ENCODE measurements at regions of chr14 and their contacts with region 1.

Region 1: DNA sequence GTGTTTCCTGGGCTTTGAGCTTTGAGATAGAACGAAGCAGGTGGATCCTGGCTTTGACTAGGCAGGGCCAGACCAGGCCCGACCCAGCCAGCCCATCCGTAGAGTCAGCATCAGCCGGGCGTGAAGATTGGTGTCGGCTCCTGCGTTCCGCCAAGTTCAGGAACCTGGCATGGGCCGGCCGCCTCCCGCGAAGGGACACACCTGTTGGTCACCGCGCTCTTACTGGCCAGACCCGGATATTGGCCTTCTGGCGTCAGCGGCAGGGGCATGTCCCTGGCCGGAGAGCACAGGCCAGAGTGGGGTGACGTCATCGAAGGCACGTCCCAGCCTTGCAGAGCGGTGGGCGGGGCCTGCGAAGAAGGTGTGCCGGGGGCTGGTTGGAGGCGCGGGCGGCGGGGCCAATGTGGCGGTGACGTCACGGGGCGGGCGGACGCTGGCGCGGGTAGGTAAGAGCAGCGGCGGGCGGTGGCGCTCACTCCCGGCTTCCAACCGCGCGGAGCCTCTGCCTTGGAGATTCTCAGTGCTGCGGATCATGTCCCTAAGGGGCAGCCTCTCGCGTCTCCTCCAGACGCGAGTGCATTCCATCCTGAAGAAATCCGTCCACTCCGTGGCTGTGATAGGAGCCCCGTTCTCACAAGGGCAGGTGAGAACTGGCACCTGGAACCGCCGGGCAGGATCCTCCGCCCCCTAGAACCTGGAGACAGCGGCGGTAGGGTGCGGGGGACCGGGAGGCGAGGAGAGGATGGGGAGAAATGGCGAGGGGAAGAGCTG is at the start of gene ARG2:
- DNase-seq: peak; percentile 91 to 96
- ATAC-seq: peak; percentile 91 to 94
- H3K4me3 ChIP-seq: peak within 1 kb of the TSS; percentile 52
- H3K27ac ChIP-seq: peak within 1 kb of the TSS; percentile 31 to 46; a peak in 4 of 6 replicates
- H3K4me1 ChIP-seq: peaks cover 23% of the 10 kb centered on the region
- CTCF ChIP-seq: no peak
- EP300 ChIP-seq: no peak
- POLR2A ChIP-seq: no peak
- RAD21 ChIP-seq: no peak
- polyA plus RNA-seq, gene ARG2: 2.5 TPM in 2 replicates

Region 2: DNA sequence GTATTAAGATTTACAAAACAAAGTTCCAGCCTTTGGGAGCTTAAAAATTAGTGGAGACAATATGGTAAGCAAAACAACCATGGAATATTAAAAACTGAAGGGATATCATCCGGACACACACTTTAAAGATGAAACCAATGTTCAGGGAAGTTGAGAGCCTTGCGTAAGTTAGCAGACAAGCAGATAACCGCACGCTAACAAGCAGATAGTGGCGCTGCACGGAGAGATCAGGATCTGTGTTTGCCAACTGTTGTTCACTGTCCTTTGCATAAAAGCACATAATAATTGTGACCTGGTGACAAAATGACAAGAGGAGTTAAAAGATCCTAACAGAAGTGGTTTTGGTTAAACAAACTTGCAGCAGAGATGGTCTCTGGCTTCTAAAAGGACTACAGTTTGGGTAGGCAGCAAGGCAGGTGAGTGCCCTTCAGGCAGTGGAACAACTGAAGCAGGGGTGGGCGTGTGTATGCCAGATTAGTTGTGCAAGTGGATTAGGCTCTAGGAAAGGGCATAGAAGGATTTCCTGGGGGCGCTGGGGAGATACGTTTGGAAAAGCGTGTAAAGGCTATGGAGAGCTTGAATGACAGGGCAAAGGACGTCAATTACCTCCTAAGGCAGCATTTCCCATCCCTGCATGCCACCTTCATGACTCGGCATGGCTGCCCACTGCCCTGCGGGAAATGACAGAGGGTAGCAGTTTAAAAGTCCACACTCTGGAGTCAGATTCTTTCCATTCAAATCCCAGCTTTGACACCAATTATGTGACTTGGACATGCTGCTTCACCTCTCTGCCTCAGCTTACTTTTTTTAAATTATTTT is 116.5 kb before region 1 on chr14:
- CTCF ChIA-PET with region 1: no interaction called
- POLR2A ChIA-PET with region 1: no interaction called
- DNase-seq: no peak
- ATAC-seq: no peak
- H3K4me3 ChIP-seq: no peak overlapping the region
- H3K27ac ChIP-seq: no peak overlapping the region
- H3K4me1 ChIP-seq: no peaks in the 10 kb centered on the region
- CTCF ChIP-seq: no peak
- EP300 ChIP-seq: no peak
- POLR2A ChIP-seq: no peak
- RAD21 ChIP-seq: no peak

Region 3: DNA sequence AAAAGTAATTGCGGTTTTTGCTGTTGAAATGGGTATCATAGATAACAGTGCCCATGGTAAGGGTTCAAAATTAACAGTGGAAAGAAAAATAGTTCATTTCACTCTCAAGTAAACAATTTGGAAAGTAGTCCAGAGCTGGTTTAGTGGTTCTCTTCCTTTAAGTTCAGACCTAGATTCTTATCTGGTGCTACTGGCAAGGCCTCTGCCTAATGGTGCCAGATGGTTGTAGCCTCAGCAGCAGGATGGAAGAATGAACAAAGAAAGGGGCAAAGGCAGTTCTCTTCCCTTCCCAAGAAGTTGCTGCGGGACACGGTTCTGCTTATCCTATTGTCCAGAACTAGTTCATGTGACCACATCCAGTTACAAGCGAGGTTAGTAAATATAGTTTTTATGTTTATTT is 10.6 kb after region 1 on chr14:
- CTCF ChIA-PET with region 1: interaction called, 12 read pairs
- POLR2A ChIA-PET with region 1: no interaction called
- DNase-seq: no peak
- ATAC-seq: no peak
- H3K4me3 ChIP-seq: no peak overlapping the region
- H3K27ac ChIP-seq: no peak overlapping the region
- H3K4me1 ChIP-seq: no peaks in the 10 kb centered on the region
- CTCF ChIP-seq: no peak
- EP300 ChIP-seq: no peak
- POLR2A ChIP-seq: no peak
- RAD21 ChIP-seq: no peak

Region 4: DNA sequence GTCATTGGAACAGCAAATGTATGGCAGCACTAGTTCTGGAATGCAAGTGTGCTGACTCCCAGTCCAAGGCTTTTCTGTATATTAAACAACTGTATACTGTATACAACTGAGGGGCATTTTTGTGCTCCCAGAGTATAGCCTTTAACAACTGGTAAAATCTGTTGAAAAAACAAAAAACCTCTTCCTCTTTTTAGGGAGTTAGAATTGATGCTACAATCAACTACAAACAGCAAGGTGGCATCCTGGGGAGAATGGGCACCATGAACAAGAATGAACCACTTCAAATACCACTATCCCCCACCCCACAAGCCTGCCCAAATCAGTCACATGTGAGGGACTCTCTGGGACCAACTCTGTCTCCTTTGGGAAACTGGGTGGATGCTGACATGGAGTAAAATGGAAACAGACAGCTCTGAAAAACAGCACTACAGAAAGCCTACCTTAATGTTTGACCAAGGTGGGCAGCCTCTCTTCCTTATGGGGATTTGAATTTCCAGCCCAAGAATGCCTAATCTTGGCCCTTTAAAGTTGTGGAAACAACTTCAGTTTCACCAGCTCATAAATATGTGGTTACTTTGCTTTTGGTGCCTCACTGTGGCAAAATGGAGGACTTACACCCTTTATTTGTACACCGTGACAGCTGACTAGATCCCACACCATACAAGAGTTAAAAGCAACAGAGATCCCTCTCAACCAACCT is 47.3 kb after region 1 on chr14:
- CTCF ChIA-PET with region 1: interaction called, 72 read pairs
- POLR2A ChIA-PET with region 1: no interaction called
- DNase-seq: peak; percentile 43 to 68
- ATAC-seq: peak; percentile 81 to 96
- H3K4me3 ChIP-seq: no peak overlapping the region
- H3K27ac ChIP-seq: no peak overlapping the region
- H3K4me1 ChIP-seq: no peaks in the 10 kb centered on the region
- CTCF ChIP-seq: peak; percentile 82
- EP300 ChIP-seq: no peak
- POLR2A ChIP-seq: no peak
- RAD21 ChIP-seq: peak; percentile 80 to 83

Region 5: DNA sequence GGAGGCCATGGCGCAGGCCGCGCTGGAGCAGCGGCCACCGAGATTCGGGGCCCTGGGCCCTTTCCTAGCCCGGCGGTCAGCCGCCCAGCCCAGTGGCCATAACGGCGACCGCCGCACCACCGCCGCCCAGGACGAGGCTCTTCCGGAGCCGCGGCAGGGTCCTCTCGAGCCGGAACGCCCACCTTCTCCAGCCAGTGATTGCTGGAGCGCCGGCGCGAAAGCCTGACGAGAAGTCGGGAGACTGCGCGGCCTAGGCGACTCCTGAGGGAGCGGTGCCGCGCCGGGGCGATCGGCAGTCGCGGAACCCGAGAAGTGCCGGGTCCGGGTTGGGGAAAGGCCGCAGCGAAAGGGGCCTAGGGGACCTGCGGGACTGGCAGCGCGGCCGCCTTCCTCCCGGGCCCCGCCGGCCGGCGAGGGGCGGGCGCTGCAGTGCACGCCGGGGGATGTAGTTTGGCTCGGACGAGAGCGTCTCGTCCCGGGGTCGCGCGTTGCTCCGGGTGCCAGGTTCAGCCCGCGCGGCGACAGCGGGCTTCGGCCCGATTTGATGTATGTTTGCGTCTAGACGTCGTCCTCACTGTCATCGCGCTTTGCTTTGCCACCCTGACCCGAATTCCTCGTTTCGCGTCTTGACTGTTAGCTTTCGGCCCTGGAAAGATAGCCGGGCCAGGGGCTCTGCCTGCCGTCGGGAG is 55.0 kb after region 1 on chr14 and contains the start of gene VTI1B:
- CTCF ChIA-PET with region 1: interaction called, 16 read pairs
- POLR2A ChIA-PET with region 1: interaction called, 3 read pairs
- DNase-seq: peak; percentile 74 to 81
- ATAC-seq: peak; percentile 96
- H3K4me3 ChIP-seq: peak within 1 kb of the TSS; percentile 97
- H3K27ac ChIP-seq: peak within 1 kb of the TSS; percentile 96 to 99
- H3K4me1 ChIP-seq: peaks cover 26% of the 10 kb centered on the region; the same call in 2 of the 3 replicates
- CTCF ChIP-seq: peak; percentile 24; the same call in 1 of the 3 replicates
- EP300 ChIP-seq: no peak
- POLR2A ChIP-seq: peak; percentile 58
- RAD21 ChIP-seq: no peak; a peak in 1 of 5 replicates
- polyA plus RNA-seq, gene VTI1B: 77.2 and 102 TPM in 2 replicates

Region 6: DNA sequence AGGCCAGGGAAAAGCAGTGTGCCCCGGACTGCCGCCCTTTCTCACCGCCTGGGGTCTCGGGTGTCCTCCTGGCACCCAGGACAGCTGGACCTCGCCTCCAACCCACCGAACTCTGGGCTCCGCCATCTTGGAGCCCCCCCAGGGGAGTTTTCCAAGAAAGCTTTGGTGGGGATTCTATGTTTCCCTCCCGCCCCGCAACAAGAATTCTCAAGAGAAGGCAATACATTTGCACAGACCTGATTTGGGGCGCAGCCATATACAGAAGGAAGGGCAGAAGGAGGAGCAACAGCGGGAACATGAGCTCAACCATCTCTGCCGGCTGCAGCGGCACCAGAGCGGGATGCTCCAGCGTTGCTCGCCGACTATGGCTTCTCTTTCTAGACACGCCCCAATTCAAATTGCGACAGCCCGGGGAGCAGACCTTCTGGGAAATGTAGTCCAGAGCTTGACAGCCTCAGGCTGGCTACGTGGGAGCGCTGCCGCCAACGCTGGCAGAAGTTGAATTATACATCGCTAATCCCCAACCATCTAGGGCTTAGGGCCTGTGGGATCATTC is 75.8 kb after region 1 on chr14 and contains the start of gene RDH11:
- CTCF ChIA-PET with region 1: interaction called, 74 read pairs
- POLR2A ChIA-PET with region 1: interaction called, 6 read pairs
- DNase-seq: peak; percentile 89 to 94
- ATAC-seq: peak; percentile 98 to 99
- H3K4me3 ChIP-seq: peak within 1 kb of the TSS; percentile 96
- H3K27ac ChIP-seq: peak within 1 kb of the TSS; percentile 89 to 93
- H3K4me1 ChIP-seq: peaks cover 21% of the 10 kb centered on the region
- CTCF ChIP-seq: no peak
- EP300 ChIP-seq: no peak
- POLR2A ChIP-seq: peak; percentile 94
- RAD21 ChIP-seq: no peak
- polyA plus RNA-seq, gene RDH11: 132 and 146 TPM in 2 replicates

Measured in A549 (cell line).